Posterior cingulate gyrus (tissue), 11 donors: ENCODE measurements at regions of chr10 and their contacts with region 1.

Region 1: DNA sequence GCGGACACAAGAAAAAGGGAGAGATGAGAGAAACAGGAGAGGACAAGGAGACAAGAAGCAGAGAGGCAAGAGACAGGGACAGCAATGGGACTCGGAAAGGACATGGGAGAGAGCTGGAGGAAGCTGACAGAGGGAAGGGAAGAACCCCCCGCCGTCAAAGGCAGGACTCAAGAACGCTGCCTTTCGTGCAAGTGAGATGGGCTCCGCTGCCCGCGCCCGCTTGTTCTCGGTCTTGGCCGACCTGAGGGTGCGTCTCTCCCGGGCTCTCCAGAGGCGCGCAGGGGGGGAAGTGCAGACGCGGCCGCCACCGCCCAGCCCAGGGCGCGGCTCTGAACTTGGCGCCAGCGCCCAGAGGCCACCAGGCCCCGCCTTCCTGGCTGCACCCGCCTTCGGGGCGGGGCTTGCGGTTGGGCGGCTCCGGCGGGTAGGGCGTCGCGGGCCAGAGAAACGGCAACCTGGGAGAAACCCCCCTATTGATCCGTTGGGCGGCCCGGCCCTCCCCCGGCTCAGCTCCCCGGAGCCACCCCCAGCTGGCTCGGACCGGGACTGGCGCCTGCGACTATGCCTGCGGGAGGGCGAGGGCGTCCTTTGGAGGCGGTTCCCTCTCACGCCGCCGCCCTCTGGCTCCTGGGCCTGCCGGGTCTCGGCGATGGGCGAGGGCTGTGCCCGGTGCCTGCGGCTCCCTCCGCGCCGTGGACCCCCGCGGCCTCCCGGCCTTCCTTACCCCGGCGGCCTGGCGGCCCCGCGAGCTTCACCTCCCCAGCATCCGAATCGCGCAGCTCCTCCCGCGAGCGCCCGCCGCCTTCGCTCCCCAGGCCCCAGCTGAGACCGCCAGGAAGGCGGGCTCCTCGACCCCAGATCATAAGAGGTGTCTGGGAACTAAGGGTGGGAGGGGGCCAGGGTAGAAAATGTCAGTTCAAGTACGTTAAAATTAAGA is 2.2 kb upstream of the ANTXRL start:
- DNase-seq: peak; percentile 58 to 97 (median 82)

Region 2: GRCh38 chr10:46106410-46107255 is 177.9 kb before region 1 on chr10:
- intact Hi-C with region 1: loop called (anchors 5 kb)
- DNase-seq: peak in 9 of 10 donors; percentile 40 to 94 (median 67)

Region 3: DNA sequence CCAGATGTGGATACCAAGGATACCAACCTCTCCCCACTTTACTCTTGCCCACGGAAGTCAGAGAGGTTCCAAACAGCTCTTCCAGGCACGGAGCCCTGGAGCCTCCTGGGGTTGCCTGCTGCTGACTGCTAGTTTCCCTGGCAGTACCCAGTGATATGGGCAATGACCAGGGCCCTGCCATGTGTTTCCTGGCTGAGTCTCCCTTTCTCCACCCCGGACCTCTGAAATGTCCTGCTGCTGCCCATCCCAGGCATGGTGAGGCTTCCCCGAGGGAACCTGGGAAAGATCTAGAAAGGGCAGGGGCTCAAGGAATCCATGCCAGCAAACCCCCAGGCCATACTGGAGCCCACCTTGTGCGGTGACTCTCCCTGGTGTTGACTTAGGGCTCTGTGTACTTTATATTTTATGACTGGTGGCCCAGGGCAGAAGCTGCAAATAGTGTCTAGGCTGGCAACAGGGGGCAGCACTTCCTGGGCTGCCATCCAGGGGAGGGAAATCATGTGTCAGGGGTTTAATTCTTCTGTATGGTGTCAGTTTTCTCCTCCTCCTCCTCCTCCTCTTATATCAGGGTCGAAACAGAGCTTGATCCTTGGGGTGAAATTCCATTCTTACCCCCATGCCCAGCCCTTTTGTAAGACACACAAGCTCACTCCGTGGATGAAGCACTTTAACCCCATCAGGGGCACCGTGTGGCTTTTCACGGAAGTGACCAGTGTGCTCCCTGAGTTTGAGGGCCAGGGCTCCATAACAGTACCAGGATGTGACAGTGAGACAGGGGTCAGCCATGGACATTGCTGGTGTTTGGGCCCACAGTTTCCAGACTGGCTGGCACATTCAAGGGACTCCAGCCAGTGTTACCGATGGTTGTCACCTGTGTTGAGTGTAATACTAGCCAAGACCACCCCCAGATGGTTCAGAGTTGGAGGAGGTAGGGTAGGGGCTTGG is 953.0 kb after region 1 on chr10:
- intact Hi-C with region 1: no loop called
- DNase-seq: no peak